IMR-90 (cell line): ENCODE measurements at regions of chr15 and their contacts with region 1.

Region 1: GRCh38 chr15:51401872-51402517 is 60.5 kb downstream of the GLDN start:
- DNase-seq: peak; percentile 26
- ATAC-seq: peak; percentile 76
- H3K4me3 ChIP-seq: no peak overlapping the region
- H3K27ac ChIP-seq: no peak overlapping the region
- H3K4me1 ChIP-seq: no peaks in the 10 kb centered on the region
- H3K27me3 ChIP-seq: peaks cover 48% of the 10 kb centered on the region
- CTCF ChIP-seq: peak; percentile 63
- POLR2A ChIP-seq: no peak
- RAD21 ChIP-seq: peak; percentile 57

Region 2: GRCh38 chr15:50840520-50840919 is 561.5 kb before region 1 on chr15:
- CTCF ChIA-PET with region 1: no interaction called
- POLR2A ChIA-PET with region 1: no interaction called
- dilution Hi-C with region 1: no loop called
- in situ Hi-C with region 1: no loop called
- intact Hi-C with region 1: no loop called
- DNase-seq: no peak
- ATAC-seq: no peak
- H3K4me3 ChIP-seq: no peak overlapping the region
- H3K27ac ChIP-seq: no peak overlapping the region
- H3K4me1 ChIP-seq: no peaks in the 10 kb centered on the region
- H3K27me3 ChIP-seq: peaks cover 4% of the 10 kb centered on the region
- CTCF ChIP-seq: no peak
- POLR2A ChIP-seq: no peak
- RAD21 ChIP-seq: no peak

Region 3: DNA sequence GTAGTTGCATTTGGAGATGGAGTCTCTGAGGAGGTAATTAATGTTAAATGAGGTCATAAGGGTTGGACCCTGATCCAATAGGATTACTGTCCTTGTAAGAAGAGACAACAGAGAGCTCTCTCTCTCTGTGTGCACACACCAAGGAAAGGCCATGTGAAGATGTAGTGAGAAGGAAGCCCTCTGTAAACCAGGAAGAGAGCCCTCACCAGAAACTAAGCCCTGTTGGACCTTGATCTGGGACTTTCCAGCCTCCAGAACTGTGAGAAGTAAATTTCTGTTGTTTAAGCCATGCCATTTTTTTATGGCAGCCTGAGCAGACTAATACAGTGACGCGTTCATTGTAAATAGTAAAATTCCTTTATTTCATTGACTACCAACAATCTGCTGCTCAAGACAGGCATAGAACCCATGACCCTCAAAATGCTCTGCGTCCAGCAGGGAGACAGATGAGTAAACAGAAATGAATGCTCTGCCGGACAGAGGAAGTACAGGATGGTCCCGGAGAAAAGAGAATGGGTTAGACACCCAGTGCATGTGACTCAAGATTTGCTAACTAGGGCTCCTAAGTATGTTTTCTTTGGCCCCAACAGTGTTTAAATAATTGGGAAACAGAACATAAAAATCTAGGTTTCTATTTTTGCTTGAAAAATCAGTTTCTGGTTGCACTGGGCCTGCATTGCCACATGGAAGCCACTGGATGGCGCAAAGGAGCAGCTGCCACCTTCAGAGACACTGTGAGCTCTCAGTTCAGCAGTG is 269.4 kb before region 1 on chr15:
- CTCF ChIA-PET with region 1: interaction called, 3 read pairs
- POLR2A ChIA-PET with region 1: no interaction called
- dilution Hi-C with region 1: no loop called
- in situ Hi-C with region 1: no loop called
- intact Hi-C with region 1: loop called (anchors 1 kb)
- DNase-seq: peak; percentile 96
- ATAC-seq: peak; percentile 96
- H3K4me3 ChIP-seq: no peak overlapping the region
- H3K27ac ChIP-seq: peak overlapping the region; percentile 52; the same call in 1 of the 2 replicates
- H3K4me1 ChIP-seq: peaks cover 6% of the 10 kb centered on the region
- H3K27me3 ChIP-seq: peaks cover 2% of the 10 kb centered on the region; the same call in 1 of the 2 replicates
- CTCF ChIP-seq: peak; percentile 96
- POLR2A ChIP-seq: no peak
- RAD21 ChIP-seq: peak; percentile 77

Region 4: GRCh38 chr15:51227940-51228783 is 173.8 kb before region 1 on chr15:
- CTCF ChIA-PET with region 1: interaction called, 3 read pairs
- POLR2A ChIA-PET with region 1: no interaction called
- dilution Hi-C with region 1: no loop called
- in situ Hi-C with region 1: no loop called
- intact Hi-C with region 1: loop called (anchors 2 kb)
- DNase-seq: peak; percentile 89
- ATAC-seq: peak; percentile 80
- H3K4me3 ChIP-seq: no peak overlapping the region
- H3K27ac ChIP-seq: no peak overlapping the region
- H3K4me1 ChIP-seq: peaks cover 12% of the 10 kb centered on the region
- H3K27me3 ChIP-seq: no peaks in the 10 kb centered on the region
- CTCF ChIP-seq: no peak
- POLR2A ChIP-seq: no peak
- RAD21 ChIP-seq: no peak

Region 5: DNA sequence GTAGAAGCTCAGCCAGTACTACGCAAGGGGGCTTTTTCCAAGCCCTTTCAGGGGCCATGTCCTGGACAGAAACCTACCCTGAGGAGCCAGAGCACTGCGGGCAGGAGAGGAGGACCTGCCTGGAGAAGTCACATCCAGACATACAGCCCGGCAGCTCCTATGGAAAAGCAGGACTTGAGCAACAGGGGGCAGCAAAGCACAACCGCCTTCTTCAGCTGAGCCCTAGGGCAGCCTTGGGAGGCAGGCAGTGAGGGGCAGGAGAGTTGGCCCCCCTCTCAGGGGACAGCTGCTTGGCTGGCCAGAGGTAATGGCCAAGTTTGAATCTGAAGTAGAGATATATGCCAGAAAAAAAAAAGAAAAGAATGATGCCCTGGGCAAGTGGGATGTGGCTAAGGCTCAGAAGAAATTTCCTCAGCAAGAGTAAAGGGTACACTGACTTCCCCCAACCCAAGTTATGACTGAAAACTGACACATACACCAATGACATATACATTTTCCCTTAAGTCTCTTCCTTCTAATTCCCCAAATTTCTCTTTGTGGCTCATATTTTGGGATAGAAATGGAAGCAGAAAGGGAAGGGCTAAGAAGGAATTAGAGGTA is 120.5 kb before region 1 on chr15:
- CTCF ChIA-PET with region 1: no interaction called
- POLR2A ChIA-PET with region 1: no interaction called
- dilution Hi-C with region 1: no loop called
- in situ Hi-C with region 1: no loop called
- intact Hi-C with region 1: loop called (anchors 1 kb)
- DNase-seq: peak; percentile 53
- ATAC-seq: peak; percentile 99
- H3K4me3 ChIP-seq: no peak overlapping the region
- H3K27ac ChIP-seq: no peak overlapping the region
- H3K4me1 ChIP-seq: no peaks in the 10 kb centered on the region; the same call in 1 of the 2 replicates
- H3K27me3 ChIP-seq: peaks cover 50% of the 10 kb centered on the region
- CTCF ChIP-seq: peak; percentile 82
- POLR2A ChIP-seq: no peak
- RAD21 ChIP-seq: peak; percentile 87

Region 6: DNA sequence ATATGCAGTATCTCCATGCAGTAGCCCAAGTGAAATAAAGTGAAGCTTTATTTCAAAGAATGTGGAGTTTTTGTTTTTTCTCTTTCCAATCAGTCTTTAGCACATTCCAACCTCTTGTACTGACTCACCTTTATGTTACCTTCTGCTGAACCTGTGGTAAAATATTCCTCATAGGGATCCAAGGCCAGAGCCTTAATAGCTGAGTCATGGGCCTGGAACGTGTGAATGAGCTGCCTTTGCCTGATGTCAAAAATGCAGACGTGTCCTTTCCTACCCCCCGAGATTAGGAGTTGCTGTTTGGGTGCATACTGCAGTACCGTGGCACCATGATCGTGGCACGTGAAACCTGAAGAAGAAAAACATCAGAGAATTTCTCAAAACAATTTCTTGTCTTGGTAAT is 48.0 kb after region 1 on chr15:
- CTCF ChIA-PET with region 1: no interaction called
- POLR2A ChIA-PET with region 1: no interaction called
- dilution Hi-C with region 1: no loop called
- in situ Hi-C with region 1: no loop called
- intact Hi-C with region 1: no loop called
- DNase-seq: no peak
- ATAC-seq: no peak
- H3K4me3 ChIP-seq: no peak overlapping the region
- H3K27ac ChIP-seq: no peak overlapping the region
- H3K4me1 ChIP-seq: 0 out of 2 replicates have a peak, but pooled peaks cover 2% of the 10 kb centered on the region
- H3K27me3 ChIP-seq: no peaks in the 10 kb centered on the region
- CTCF ChIP-seq: no peak
- POLR2A ChIP-seq: no peak
- RAD21 ChIP-seq: no peak